ENCODE measurements at regions of chr2 and their contacts with region 1.

Region 1: GRCh38 chr2:28751252-28751955 is at the start of gene PPP1CB:
- DNase-seq: peak; percentile 96
- ATAC-seq: peak; percentile 88
- H3K4me3 Mint-ChIP-seq: peak within 1 kb of the TSS; percentile 90
- H3K27ac Mint-ChIP-seq: peak within 1 kb of the TSS; percentile 95
- H3K4me1 Mint-ChIP-seq: peaks cover 53% of the 10 kb centered on the region
- H3K27me3 Mint-ChIP-seq: no peaks in the 10 kb centered on the region
- total RNA-seq, gene PPP1CB: 153 to 213 TPM

Region 2: DNA sequence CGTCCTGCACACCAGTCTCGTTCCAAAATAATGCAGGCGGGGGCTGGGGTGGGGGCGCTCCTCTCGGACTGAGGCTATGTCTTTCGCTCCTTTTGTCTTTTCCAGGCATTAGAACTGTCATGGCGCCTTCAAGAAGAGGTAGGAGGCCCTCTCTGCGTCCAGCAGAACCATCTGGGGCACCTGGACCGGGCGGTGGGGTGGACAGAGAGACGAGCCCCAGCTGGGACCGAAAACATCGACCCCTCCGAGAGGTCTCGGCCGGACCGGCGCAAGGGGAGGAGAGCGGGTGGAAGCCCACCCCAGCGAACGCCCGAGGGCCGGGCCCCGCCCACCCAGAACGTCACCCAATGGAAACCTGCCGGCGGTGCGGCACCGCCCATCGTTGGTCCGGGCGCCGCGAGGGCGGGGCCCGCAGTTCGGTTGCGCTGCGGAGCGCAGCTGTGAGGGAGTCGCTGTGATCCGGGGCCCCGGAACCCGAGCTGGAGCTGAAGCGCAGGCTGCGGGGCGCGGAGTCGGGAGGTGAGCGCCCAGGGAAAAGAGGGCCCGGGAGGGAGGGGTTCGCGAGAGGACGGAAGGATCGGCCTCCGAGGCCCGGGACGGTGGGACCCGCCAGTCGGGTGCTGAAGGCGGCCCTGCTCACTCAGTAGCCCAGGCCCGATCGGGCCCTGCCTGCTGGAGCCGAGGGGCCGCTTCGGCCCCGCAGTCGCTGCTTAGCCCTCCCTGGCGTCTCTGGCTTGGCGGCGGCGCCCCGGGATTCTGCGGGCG is 1323.0 kb before region 1 on chr2 and contains the start of gene NRBP1:
- CTCF ChIA-PET with region 1: no interaction called
- POLR2A ChIA-PET with region 1: no interaction called
- intact Hi-C with region 1: loop called in 1 of 2 experiments (anchors 2 kb)
- DNase-seq: peak; percentile 97
- ATAC-seq: peak; percentile 85
- H3K4me3 Mint-ChIP-seq: peak within 1 kb of the TSS; percentile 100
- H3K27ac Mint-ChIP-seq: peak within 1 kb of the TSS; percentile 98
- H3K4me1 Mint-ChIP-seq: peaks cover 37% of the 10 kb centered on the region
- H3K27me3 Mint-ChIP-seq: no peaks in the 10 kb centered on the region
- total RNA-seq, gene NRBP1: 74.3 to 74.4 TPM

Region 3: DNA sequence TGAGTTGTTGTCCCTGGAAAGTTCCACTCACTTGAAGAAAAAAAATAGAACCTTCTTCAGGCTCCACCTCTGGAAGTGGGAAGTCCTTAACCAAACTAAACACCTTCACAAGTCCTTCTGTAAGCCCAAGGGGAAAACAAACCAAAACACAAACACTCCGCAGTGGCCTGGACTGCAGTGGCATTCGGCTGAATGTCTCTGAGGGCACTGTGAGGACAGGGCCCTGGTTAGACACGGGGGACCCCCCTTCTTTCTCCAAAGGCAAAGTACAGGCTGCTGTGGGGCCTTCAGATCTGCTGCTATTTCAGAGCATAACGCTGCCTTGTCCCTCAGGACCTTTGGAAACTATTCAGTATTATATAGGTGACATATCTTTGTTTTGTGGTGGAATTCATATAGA is 330.7 kb before region 1 on chr2:
- CTCF ChIA-PET with region 1: no interaction called
- POLR2A ChIA-PET with region 1: no interaction called
- intact Hi-C with region 1: no loop called
- DNase-seq: no peak
- ATAC-seq: no peak
- H3K4me3 Mint-ChIP-seq: no peak overlapping the region
- H3K27ac Mint-ChIP-seq: no peak overlapping the region
- H3K4me1 Mint-ChIP-seq: peaks cover 44% of the 10 kb centered on the region
- H3K27me3 Mint-ChIP-seq: no peaks in the 10 kb centered on the region

Region 4: DNA sequence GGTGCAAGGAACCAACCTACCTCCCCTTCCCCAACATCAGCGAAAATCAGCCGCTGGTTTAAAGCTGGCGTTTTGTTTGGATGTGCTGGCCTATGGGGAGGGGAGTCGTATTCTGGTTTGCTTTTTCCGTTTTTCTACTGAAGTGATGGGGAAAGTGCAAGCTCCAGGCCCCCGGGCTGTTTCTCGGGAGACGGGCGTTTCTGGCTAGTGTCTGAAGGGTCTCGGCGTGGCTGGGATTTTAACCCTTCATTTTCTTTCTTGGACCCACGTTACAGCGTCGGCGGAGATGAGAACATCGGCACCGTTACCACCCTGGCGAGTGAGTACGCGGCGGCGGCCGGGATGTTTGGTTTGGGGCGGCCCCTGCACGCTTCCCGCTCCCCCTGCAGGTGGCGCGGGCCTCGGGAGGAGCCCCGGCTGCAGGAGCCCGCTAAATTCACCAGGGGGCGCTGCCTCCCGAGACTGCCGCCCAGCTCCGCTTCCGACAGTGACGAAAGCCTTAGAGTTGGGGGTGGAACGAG is 184.8 kb before region 1 on chr2:
- CTCF ChIA-PET with region 1: interaction called, 10 read pairs
- POLR2A ChIA-PET with region 1: interaction called, 4 read pairs
- intact Hi-C with region 1: loop called (anchors 1 kb)
- DNase-seq: peak; percentile 96
- ATAC-seq: peak; percentile 99
- H3K4me3 Mint-ChIP-seq: peak overlapping the region; percentile 81
- H3K27ac Mint-ChIP-seq: peak overlapping the region; percentile 87
- H3K4me1 Mint-ChIP-seq: peaks cover 18% of the 10 kb centered on the region
- H3K27me3 Mint-ChIP-seq: peaks cover 2% of the 10 kb centered on the region

Region 5: DNA sequence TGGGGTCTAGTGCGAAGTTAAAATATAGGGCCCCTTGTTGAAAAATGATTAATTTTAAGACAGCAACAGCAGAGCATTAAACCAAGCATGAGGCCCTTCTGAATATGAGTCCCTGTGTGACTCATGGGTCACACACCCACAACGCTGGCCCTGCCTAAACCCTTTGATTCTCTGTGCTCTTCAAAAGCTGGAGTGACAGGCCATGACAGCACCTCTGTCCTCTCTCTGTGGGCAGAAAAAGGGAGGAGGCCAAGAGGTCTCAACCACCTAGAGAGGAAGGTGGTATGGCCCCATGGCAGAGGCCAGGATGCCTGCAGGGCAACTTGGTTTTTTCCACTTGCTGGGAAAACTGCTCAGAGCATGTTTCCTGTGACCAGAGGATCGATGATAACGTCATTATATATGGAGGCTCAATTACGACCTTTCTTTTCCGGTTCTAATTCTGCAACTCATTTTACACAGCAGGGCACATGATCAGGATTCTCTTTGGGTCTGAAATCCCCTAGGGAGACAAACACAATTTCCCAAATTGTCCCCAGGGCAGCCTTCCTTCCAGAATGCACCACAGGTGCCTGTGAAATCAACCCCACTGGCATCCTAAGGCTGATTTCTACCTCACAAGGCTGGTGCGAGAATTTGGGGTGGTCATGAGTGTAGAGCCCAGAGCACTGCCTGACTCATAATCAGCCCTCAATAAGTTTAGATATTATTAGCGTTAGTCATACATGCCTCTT is 101.8 kb before region 1 on chr2:
- CTCF ChIA-PET with region 1: no interaction called
- POLR2A ChIA-PET with region 1: no interaction called
- intact Hi-C with region 1: loop called in 1 of 2 experiments (anchors 1 kb)
- DNase-seq: peak; percentile 79
- ATAC-seq: peak; percentile 97
- H3K4me3 Mint-ChIP-seq: peak overlapping the region; percentile 8
- H3K27ac Mint-ChIP-seq: peak overlapping the region; percentile 83
- H3K4me1 Mint-ChIP-seq: peaks cover 28% of the 10 kb centered on the region
- H3K27me3 Mint-ChIP-seq: no peaks in the 10 kb centered on the region

Region 6: DNA sequence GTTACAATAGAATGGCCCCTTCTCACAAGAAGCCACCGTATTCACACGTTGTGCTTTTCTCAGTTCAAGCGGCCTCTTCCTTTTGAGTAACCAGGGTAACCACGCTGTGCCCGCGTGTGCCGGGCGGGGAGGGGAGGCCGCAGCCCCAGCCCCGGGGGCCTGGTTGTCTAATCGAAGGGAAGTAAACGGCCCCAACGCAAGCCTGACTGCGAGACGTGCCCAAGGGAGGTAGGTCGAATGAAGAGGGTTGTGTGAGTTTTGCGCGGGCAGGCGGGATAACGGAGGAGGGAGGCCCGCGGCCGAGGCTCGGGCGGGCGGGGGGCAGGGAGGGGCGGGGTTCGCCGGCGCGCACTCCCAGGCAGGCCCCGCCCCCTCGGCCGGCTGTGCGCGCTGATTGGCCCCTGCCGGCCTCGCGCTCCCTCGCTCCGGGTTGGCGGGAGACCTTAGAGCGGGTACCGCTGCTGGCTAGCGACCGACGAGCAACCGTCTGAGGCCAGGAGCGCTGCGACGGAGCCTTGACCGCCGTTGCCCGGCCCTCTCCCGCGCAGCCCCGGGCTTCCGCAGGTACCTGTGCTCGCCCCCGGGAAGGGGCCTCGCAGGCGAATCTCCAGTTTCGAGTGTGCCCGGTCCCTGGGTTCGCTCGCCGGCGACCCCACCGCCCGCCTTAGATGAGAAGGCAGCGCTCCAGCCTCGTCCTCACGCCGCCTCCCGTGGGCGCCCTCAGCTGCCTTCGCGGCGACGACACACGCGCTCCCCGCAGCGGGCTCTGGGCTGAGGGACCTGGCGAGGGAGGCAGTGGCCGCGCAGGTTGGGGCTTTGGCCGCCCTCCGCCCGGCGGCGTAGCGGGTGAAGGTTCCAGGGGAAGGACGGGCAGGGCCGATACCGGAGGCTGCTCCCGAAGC is 59.2 kb after region 1 on chr2 and contains the start of gene SPDYA:
- CTCF ChIA-PET with region 1: no interaction called
- POLR2A ChIA-PET with region 1: interaction called, 6 read pairs
- intact Hi-C with region 1: loop called (anchors 1 to 2 kb)
- DNase-seq: peak; percentile 90
- ATAC-seq: peak; percentile 95
- H3K4me3 Mint-ChIP-seq: peak within 1 kb of the TSS; percentile 59
- H3K27ac Mint-ChIP-seq: no peak within 1 kb of the TSS
- H3K4me1 Mint-ChIP-seq: peaks cover 14% of the 10 kb centered on the region
- H3K27me3 Mint-ChIP-seq: no peaks in the 10 kb centered on the region
- total RNA-seq, gene SPDYA: 0.93 to 1.2 TPM

Region 7: DNA sequence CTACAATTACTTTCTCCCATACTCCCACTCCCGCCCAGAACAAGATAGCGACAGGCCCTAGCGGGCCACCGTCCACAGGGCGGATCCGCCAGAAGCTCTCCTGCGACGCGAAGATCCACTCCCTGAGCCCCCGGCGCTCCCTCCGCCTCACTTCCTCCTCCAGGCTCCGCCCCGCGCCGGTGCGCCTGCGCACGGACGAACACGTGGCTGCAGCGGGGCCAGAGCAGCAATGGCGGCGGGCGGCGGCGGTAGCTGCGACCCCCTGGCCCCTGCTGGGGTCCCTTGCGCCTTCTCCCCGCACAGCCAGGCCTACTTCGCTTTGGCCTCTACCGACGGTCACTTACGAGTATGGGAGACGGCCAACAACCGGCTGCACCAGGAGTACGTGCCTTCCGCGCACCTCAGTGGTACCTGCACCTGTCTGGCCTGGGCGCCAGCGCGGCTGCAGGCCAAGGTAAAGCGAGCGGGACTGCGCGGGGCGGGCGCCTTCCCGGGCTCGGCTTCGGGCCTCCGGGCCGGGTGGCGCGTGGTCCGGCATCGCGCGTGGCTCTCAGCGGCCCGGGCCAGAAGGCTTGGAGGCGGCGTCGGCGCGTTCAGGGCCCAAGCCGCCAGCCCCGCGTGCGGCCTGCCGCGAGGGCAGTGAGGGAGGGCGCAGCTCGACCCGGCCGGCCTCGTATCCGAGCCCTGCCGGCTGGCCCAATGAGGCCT is 143.2 kb after region 1 on chr2 and contains the start of gene WDR43:
- CTCF ChIA-PET with region 1: no interaction called
- POLR2A ChIA-PET with region 1: interaction called, 3 read pairs
- intact Hi-C with region 1: loop called (anchors 1 to 2 kb)
- DNase-seq: peak; percentile 99
- ATAC-seq: peak; percentile 94
- H3K4me3 Mint-ChIP-seq: peak within 1 kb of the TSS; percentile 97
- H3K27ac Mint-ChIP-seq: peak within 1 kb of the TSS; percentile 95
- H3K4me1 Mint-ChIP-seq: peaks cover 32% of the 10 kb centered on the region
- H3K27me3 Mint-ChIP-seq: no peaks in the 10 kb centered on the region
- total RNA-seq, gene WDR43: 109 to 170 TPM

Region 8: GRCh38 chr2:29115797-29116781 is 364.7 kb after region 1 on chr2:
- CTCF ChIA-PET with region 1: no interaction called
- POLR2A ChIA-PET with region 1: no interaction called
- intact Hi-C with region 1: loop called in 1 of 2 experiments (anchors 1 kb)
- DNase-seq: peak; percentile 88
- ATAC-seq: peak; percentile 74
- H3K4me3 Mint-ChIP-seq: peak overlapping the region; percentile 90
- H3K27ac Mint-ChIP-seq: peak overlapping the region; percentile 96
- H3K4me1 Mint-ChIP-seq: peaks cover 43% of the 10 kb centered on the region
- H3K27me3 Mint-ChIP-seq: peaks cover 5% of the 10 kb centered on the region